WTC11 (cell line): ENCODE measurements at regions of chr15 and their contacts with region 1.

Region 1: DNA sequence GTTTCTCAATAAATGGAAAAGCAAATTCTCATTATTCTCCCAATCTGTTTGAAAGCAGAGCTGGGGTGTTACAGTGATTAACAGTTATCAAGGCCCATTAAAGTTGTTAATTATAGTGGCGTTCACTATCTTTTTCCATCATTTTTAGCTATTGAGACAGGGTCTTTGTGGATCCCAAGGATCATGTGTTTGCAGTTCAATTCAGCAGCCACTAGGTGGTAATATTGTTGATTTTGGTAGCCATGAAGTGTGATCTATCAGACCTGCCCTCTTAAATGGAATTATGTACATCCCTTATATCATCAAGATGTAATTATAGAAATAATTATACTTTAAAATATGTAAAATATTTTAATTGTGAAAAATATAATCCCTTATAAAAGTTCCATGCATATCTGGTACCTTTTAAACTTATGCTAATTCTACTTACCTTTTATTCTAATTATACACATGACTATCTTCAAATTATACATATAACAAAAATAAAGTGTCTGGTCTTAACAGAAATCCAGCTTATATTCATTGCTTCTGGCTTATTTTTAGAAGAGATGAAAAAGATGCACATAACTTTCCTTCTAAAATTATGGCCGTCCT is 126.4 kb downstream of the GREM1 start:
- DNase-seq: no peak
- ATAC-seq: peak; percentile 32; the same call in 1 of the 2 replicates
- H3K4me3 Mint-ChIP-seq: no peak overlapping the region
- H3K27ac Mint-ChIP-seq: no peak overlapping the region
- H3K4me1 Mint-ChIP-seq: peaks cover 8% of the 10 kb centered on the region
- H3K27me3 Mint-ChIP-seq: no peaks in the 10 kb centered on the region
- CTCF ChIP-seq: peak; percentile 46

Region 2: DNA sequence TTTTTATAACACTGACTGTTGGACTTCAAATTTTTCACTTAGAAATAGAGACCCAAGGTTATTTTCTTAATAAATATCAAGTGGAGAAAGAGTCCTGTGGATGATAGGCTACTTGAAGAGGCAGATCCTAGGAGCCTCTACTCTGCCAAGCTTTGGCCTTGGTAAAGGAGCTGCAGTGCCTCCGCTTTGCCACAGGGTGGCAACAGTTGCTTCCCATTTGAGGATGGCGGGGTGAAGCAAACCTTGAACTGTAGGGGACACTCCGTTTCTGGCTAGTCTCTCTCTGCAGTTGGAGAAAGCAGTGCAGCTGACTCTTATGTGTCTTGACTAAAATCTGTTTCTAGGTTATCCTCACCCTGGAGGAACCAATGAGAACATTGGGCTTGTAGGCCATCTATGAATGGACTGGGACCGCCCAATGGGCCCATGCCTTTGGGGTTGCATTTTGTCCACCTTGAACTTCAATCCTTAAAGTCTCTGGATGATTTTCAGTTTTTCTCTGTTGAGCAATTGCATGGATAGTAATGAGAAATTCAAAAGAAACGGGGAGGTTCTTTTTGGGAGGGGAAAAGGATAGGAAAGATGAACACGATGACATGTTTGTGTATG is 192.9 kb before region 1 on chr15:
- CTCF ChIA-PET with region 1: interaction called, 10 read pairs
- POLR2A ChIA-PET with region 1: no interaction called
- DNase-seq: peak; percentile 70
- ATAC-seq: peak; percentile 89
- H3K4me3 Mint-ChIP-seq: no peak overlapping the region
- H3K27ac Mint-ChIP-seq: no peak overlapping the region
- H3K4me1 Mint-ChIP-seq: peaks cover 29% of the 10 kb centered on the region
- H3K27me3 Mint-ChIP-seq: no peaks in the 10 kb centered on the region
- CTCF ChIP-seq: peak; percentile 87

Region 3: DNA sequence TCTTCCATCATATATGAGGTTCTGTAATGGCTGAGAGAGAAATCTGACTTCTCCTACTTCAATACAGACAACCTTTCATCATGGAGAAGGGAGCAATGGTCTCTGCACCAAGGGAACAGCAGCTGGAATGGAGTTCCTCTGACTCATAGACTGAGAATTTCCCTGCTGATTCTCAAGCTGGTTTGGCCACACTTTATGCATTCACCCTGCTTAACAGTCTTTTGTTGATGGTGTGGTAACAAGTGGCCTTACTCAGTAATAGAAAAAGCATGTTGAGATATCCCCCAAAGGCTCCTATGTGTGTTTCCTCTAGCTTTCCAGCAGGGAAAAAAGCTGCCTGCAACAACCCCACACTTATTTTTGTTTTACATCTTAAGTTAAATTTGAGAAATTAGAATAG is 11.7 kb after region 1 on chr15:
- CTCF ChIA-PET with region 1: interaction called, 20 read pairs
- POLR2A ChIA-PET with region 1: interaction called, 3 read pairs
- DNase-seq: no peak
- ATAC-seq: peak; percentile 80
- H3K4me3 Mint-ChIP-seq: no peak overlapping the region
- H3K27ac Mint-ChIP-seq: peak overlapping the region; percentile 57
- H3K4me1 Mint-ChIP-seq: peaks cover 17% of the 10 kb centered on the region
- H3K27me3 Mint-ChIP-seq: no peaks in the 10 kb centered on the region
- CTCF ChIP-seq: no peak

Region 4: DNA sequence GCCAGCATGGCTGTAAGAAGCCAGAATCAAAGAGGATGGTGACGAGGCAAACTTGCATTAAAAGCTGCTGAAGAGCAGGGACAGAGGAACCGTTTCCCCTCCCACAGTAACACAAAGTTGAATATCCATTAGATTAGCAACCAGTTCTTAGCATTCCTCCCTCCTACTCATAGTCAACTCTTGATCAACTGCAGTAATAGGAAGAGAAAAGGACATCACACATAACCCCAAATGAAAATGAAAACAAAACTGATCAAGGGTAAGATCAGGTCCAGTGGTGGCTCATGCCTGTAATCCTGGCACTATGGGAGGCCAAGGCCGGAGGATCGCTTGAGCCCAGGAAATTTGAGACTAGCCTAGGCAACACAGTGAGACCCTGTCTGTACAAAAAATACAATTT is 38.7 kb after region 1 on chr15:
- CTCF ChIA-PET with region 1: interaction called, 13 read pairs
- POLR2A ChIA-PET with region 1: no interaction called
- DNase-seq: no peak
- ATAC-seq: no peak
- H3K4me3 Mint-ChIP-seq: no peak overlapping the region
- H3K27ac Mint-ChIP-seq: no peak overlapping the region
- H3K4me1 Mint-ChIP-seq: peaks cover 22% of the 10 kb centered on the region
- H3K27me3 Mint-ChIP-seq: no peaks in the 10 kb centered on the region
- CTCF ChIP-seq: no peak

Region 5: GRCh38 chr15:32928876-32929275 is 84.7 kb after region 1 on chr15:
- CTCF ChIA-PET with region 1: no interaction called
- POLR2A ChIA-PET with region 1: no interaction called
- DNase-seq: no peak
- ATAC-seq: no peak
- H3K4me3 Mint-ChIP-seq: no peak overlapping the region
- H3K27ac Mint-ChIP-seq: no peak overlapping the region
- H3K4me1 Mint-ChIP-seq: no peaks in the 10 kb centered on the region
- H3K27me3 Mint-ChIP-seq: no peaks in the 10 kb centered on the region; the same call in 1 of the 2 replicates
- CTCF ChIP-seq: no peak

Region 6: GRCh38 chr15:32956006-32956405 is 111.8 kb after region 1 on chr15:
- CTCF ChIA-PET with region 1: interaction called, 35 read pairs
- POLR2A ChIA-PET with region 1: no interaction called
- DNase-seq: no peak
- ATAC-seq: peak; percentile 58
- H3K4me3 Mint-ChIP-seq: no peak overlapping the region
- H3K27ac Mint-ChIP-seq: no peak overlapping the region
- H3K4me1 Mint-ChIP-seq: peaks cover 39% of the 10 kb centered on the region
- H3K27me3 Mint-ChIP-seq: no peaks in the 10 kb centered on the region; the same call in 1 of the 2 replicates
- CTCF ChIP-seq: 0 out of 2 replicates have a peak, but pooled peaks have one; percentile 17